Ascending aorta (tissue), 2 donors: ENCODE measurements at regions of chr2 and their contacts with region 1.

Region 1: GRCh38 chr2:39723946-39724827 is 54.9 kb downstream of the THUMPD2 start:
- DNase-seq: no peak
- H3K4me3 ChIP-seq: peak overlapping the region in 1 of 2 donors; percentile 26
- H3K27ac ChIP-seq: peak overlapping the region; percentile 40 to 60
- H3K4me1 ChIP-seq: peaks cover 6 to 36% of the 10 kb centered on the region in 2 donors
- H3K27me3 ChIP-seq: no peaks in the 10 kb centered on the region
- CTCF ChIP-seq: no peak

Region 2: GRCh38 chr2:39033980-39034379 is 690.2 kb before region 1 on chr2:
- intact Hi-C with region 1: no loop called
- DNase-seq: no peak
- H3K4me3 ChIP-seq: no peak overlapping the region
- H3K27ac ChIP-seq: no peak overlapping the region
- H3K4me1 ChIP-seq: no peaks in the 10 kb centered on the region
- H3K27me3 ChIP-seq: no peaks in the 10 kb centered on the region
- CTCF ChIP-seq: no peak

Region 3: DNA sequence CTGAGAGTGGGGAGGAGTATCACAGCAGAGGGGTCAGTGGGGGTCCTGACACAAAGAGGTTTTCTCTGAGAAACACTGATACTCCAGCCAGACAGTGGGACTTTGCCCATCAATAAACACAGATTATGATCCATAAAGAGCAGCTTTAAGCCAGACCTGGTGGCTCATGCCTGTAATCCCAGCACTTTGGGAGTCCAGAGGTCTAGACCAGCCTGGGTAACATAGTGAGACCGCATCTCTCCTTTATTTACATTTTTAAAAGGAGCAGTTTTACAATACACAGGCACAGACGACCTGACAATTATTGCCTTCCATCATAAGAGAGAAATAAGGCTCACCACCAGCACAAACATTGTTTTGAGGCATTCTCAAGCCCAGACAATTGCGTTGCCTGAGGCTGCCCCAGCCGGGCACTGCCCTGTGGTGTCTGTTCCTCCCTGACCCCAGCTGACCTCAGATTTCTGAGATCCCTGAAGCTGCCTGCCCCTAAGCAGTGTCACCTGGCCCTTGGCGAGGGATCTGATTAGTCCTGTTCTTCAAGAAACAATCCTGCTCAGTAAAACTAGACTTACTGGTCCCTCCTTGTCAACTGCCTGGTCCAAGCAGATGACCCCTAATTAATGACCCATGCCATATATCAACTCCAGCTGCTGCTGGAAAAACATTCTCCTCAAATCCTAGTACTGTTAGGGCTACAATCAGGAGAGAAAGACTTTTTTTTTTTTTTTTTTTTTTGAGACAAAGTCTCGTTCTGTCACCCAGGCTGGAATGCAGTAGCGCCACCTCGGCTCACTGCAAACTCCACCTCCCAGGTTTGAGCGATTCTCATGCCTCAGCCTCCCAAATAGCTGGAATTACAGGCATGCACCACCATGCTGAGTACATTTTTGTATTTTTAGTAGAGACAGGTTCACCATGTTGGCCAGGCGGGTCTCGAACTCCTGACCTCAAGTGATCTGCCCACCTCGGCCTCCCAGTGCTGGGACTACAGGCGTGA is 543.9 kb before region 1 on chr2:
- intact Hi-C with region 1: no loop called
- DNase-seq: no peak
- H3K4me3 ChIP-seq: no peak overlapping the region
- H3K27ac ChIP-seq: no peak overlapping the region
- H3K4me1 ChIP-seq: no peaks in the 10 kb centered on the region
- H3K27me3 ChIP-seq: no peaks in the 10 kb centered on the region
- CTCF ChIP-seq: no peak

Region 4: GRCh38 chr2:39665811-39666490 is 58.2 kb before region 1 on chr2 and contains the start of gene TMEM178A:
- intact Hi-C with region 1: loop called (anchors 5 kb)
- DNase-seq: no peak
- H3K4me3 ChIP-seq: peak within 1 kb of the TSS; percentile 86 to 92
- H3K27ac ChIP-seq: peak within 1 kb of the TSS in 1 of 2 donors; percentile 40
- H3K4me1 ChIP-seq: peaks cover 0 to 10% of the 10 kb centered on the region in 2 donors
- H3K27me3 ChIP-seq: no peaks in the 10 kb centered on the region
- CTCF ChIP-seq: no peak
- total RNA-seq, gene TMEM178A: 29.5 TPM

Region 5: GRCh38 chr2:39737661-39738060 is 13.5 kb after region 1 on chr2:
- intact Hi-C with region 1: loop called (anchors 2 kb)
- DNase-seq: peak in 1 of 2 donors; percentile 88
- H3K4me3 ChIP-seq: peak overlapping the region in 1 of 2 donors; percentile 57
- H3K27ac ChIP-seq: peak overlapping the region; percentile 75 to 84
- H3K4me1 ChIP-seq: peaks cover 0 to 28% of the 10 kb centered on the region in 2 donors
- H3K27me3 ChIP-seq: no peaks in the 10 kb centered on the region
- CTCF ChIP-seq: no peak